Activated CD4-positive, alpha-beta memory T cell treated with anti-CD3 and anti-CD28 coated beads, Interleukin-2, amount 10 ng/mL, durations not matched to agents 7 days and 5 days (primary cell): ENCODE measurements at regions of chrX and their contacts with region 1.

Region 1: GRCh38 chrX:154397819-154398724 is at the start of gene RPL10:
- DNase-seq: peak; percentile 93
- H3K4me3 Mint-ChIP-seq: peak within 1 kb of the TSS; percentile 98
- H3K27ac Mint-ChIP-seq: peak within 1 kb of the TSS; percentile 100
- H3K4me1 Mint-ChIP-seq: peaks cover 16% of the 10 kb centered on the region
- H3K27me3 Mint-ChIP-seq: no peaks in the 10 kb centered on the region
- total RNA-seq, gene RPL10: 2,958 to 2,962 TPM

Region 2: DNA sequence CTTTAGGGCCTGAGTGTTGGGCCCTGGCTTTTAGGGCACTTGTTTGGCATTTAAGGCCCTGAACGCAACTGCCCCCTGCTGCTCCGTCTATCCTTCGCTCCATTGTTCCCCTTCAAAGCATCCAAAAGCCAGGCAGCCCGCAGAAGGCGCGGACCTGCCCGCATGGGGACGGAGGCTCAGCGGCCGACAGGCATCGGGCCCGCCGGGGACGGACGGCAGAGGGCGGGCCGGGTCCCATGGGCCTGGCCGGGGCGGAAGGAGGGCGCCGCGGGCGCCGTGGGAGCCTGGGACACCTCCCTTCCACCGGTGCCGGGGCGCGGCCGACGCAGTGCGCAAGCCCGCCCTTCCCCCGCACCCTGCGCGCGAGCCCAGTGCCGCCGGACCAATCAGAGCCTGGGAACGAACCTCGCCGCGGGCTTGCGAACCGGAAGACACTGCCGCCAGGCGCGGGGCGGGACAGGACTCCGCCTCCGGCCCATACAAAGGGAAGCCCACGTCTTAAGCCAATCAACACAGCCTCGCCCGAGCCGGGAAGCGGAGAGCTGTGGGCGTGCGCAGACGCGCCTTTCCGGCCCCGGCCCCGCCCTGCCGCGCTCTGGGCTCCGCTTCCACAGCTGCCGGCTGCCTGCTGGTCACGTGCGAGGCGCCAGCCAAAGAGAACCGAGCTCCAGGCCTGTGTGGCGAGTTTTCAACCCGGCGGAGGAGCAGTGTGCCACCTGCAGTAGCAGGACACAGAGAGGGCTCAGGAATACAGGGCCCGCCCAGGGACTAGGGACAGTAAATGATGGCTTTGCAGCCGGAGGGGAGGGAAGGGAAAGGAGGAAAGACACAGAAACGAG is 469.9 kb before region 1 on chrX:
- CTCF ChIA-PET with region 1: no interaction called
- POLR2A ChIA-PET with region 1: interaction called, 10 read pairs
- DNase-seq: peak; percentile 95
- H3K4me3 Mint-ChIP-seq: peak overlapping the region; percentile 91
- H3K27ac Mint-ChIP-seq: peak overlapping the region; percentile 97
- H3K4me1 Mint-ChIP-seq: peaks cover 34% of the 10 kb centered on the region
- H3K27me3 Mint-ChIP-seq: no peaks in the 10 kb centered on the region

Region 3: DNA sequence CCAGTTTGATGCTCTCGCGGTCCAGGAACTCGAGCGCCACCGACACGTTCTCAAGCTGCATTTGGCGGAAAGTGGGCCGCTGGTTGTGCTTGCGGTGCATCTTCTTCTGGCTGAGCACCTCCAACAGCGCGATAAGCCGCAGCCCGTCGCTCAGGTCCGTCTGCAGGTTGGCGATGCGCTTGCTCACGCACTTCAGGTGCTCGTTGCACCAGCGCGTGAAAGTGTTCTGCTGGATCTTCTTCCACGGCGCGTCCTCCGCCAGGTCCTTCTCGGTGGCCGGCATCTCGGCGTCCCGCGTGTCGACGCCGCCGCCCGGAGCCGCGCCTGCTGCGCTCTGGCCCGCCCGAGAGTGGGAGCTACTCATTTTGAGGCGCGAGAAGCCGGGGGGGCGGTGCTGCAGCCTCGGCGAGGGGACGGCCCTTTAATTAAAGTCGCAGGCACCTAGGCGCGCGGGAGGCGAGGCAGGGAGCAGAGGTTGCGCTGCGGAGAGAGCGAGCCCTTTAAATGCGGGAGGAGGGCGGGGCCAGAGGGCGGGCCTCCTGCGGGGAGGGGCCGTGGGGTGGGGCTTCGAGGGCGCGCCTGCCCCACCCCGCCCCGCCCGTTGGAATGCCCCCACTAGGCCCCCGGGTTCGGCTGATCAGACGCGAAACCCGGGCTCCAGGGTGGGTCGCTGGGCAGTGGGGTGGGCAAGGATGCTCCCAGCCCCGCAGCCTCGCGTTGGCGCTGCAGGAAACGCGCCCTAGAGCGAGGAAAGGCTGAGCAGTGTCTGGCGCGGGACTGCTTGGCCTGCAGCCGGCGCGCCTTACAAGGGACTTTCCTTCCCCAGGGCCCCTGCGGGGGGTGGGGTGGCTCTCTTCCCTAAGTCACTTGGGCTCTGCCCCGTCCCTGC is 26.9 kb before region 1 on chrX:
- CTCF ChIA-PET with region 1: interaction called, 5 read pairs
- POLR2A ChIA-PET with region 1: interaction called, 37 read pairs
- DNase-seq: peak; percentile 95
- H3K4me3 Mint-ChIP-seq: peak overlapping the region; percentile 79
- H3K27ac Mint-ChIP-seq: peak overlapping the region; percentile 82
- H3K4me1 Mint-ChIP-seq: peaks cover 36% of the 10 kb centered on the region
- H3K27me3 Mint-ChIP-seq: no peaks in the 10 kb centered on the region

Region 4: GRCh38 chrX:154428176-154429010 is 30.3 kb after region 1 on chrX and contains the start of gene ATP6AP1:
- CTCF ChIA-PET with region 1: interaction called, 4 read pairs
- POLR2A ChIA-PET with region 1: interaction called, 28 read pairs
- DNase-seq: peak; percentile 92
- H3K4me3 Mint-ChIP-seq: peak within 1 kb of the TSS; percentile 75
- H3K27ac Mint-ChIP-seq: peak within 1 kb of the TSS; percentile 69
- H3K4me1 Mint-ChIP-seq: peaks cover 25% of the 10 kb centered on the region
- H3K27me3 Mint-ChIP-seq: no peaks in the 10 kb centered on the region
- total RNA-seq, gene ATP6AP1: 52.3 to 53.2 TPM

Region 5: DNA sequence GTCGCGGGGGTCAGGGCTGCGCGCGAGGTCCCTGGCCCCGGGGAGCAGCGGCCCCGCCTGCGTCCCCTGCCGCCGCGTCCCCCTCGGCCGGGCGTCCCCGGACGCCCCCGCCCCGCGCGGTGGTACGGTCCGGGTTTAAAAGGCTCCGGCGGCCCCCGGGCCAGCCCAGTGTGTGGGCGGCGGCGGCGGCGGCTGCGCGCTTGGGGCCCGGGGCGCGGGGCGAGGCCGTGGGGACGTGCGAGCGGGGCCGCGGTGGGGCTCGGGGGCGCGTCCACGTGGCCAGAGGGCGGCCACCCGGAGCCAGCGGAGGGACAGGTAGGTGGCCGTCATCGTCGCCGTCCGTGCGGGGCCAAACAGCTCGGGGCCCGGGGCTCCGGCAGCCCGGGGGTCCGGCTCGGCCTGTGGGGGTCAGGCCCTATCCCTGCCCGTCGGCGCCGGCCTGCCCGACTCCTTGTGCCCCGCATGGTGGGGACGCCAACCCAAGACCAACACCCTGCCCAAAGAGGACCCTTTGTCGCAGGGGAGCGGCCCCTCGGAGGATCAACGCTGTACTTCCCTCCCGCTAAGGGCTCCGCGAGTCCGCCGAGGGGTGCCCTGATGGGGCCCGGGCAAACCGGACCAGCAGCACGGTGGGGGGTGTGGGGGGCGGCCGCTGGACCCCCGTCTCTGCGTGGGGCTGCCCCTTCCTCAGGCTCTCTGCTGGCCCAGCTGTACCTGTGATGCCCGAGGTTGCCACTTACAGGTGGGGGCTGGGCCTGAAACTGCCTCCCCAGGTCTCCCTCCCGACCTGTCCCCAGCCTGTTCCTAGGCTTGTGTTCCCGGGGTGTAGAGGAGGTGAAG is 60.3 kb after region 1 on chrX and contains the start of gene PLXNA3:
- CTCF ChIA-PET with region 1: no interaction called
- POLR2A ChIA-PET with region 1: interaction called, 11 read pairs
- DNase-seq: peak; percentile 62
- H3K4me3 Mint-ChIP-seq: peak within 1 kb of the TSS; percentile 92
- H3K27ac Mint-ChIP-seq: peak within 1 kb of the TSS; percentile 88
- H3K4me1 Mint-ChIP-seq: peaks cover 13% of the 10 kb centered on the region
- H3K27me3 Mint-ChIP-seq: no peaks in the 10 kb centered on the region
- total RNA-seq, gene PLXNA3: 49.3 to 52.8 TPM

Region 6: GRCh38 chrX:154490414-154491083 is 92.5 kb after region 1 on chrX and contains the start of gene SLC10A3:
- CTCF ChIA-PET with region 1: interaction called, 8 read pairs
- POLR2A ChIA-PET with region 1: interaction called, 30 read pairs
- DNase-seq: peak; percentile 92
- H3K4me3 Mint-ChIP-seq: peak within 1 kb of the TSS; percentile 87
- H3K27ac Mint-ChIP-seq: peak within 1 kb of the TSS; percentile 92
- H3K4me1 Mint-ChIP-seq: peaks cover 23% of the 10 kb centered on the region
- H3K27me3 Mint-ChIP-seq: no peaks in the 10 kb centered on the region
- total RNA-seq, gene SLC10A3: 27.0 to 27.6 TPM

Region 7: DNA sequence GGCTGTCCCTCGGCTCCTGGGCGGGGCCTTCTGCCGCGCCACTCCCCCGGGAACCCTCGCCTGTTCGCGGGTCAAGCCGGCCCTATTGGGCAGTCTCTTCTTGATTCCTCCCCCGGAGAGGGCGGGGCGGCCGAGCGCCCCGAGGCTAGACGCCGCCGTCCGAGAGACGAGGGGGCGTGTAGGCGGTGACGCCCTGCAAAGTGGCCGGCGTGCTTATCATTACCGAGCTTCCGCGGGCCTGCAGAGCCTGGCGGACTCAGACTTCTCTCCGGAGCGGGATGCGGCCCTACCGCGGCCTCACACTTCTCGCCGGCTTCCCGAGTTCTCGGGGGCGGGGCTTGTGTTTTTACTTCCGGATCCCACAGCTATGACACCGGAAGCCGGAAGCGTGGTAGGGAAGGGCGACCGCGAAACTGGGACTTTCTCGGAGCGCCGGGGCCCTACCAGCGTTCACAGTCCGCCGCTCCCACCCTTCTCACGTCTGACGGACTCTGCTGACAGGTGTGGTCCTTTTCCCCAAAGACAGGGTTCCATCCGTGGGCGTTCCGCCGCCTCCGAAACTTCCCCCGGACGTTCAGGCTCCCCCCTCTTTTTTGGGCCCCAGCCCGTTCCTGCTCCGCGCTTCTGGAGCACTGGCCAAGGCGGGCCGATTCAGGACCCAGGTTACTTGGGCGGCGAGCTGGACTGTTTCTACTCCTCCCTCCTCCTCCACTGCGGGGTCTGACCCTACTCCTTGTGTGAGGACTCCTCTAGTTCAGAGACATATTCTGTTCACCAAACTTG is 149.4 kb after region 1 on chrX and contains the start of gene IKBKG:
- CTCF ChIA-PET with region 1: no interaction called
- POLR2A ChIA-PET with region 1: interaction called, 14 read pairs
- DNase-seq: peak; percentile 89
- H3K4me3 Mint-ChIP-seq: peak within 1 kb of the TSS; percentile 90
- H3K27ac Mint-ChIP-seq: peak within 1 kb of the TSS; percentile 87
- H3K4me1 Mint-ChIP-seq: peaks cover 56% of the 10 kb centered on the region
- H3K27me3 Mint-ChIP-seq: no peaks in the 10 kb centered on the region
- total RNA-seq, gene IKBKG: 51.9 to 54.0 TPM